Dorsolateral prefrontal cortex (tissue), 120 donors: ENCODE measurements at regions of chr3 and their contacts with region 1.

Region 1: GRCh38 chr3:72447059-72447946 is 400.9 kb downstream of the SHQ1 start:
- DNase-seq: peak; percentile 78 to 96 (median 89)
- H3K4me3 ChIP-seq: peak overlapping the region; percentile 61 to 96 (median 87)
- H3K27ac ChIP-seq: peak overlapping the region; percentile 45 to 96 (median 88)
- H3K27me3 ChIP-seq: no peaks in the 10 kb centered on the region
- CTCF ChIP-seq: peak in 3 of 56 donors; percentile 10 to 18 (median 11)

Region 2: DNA sequence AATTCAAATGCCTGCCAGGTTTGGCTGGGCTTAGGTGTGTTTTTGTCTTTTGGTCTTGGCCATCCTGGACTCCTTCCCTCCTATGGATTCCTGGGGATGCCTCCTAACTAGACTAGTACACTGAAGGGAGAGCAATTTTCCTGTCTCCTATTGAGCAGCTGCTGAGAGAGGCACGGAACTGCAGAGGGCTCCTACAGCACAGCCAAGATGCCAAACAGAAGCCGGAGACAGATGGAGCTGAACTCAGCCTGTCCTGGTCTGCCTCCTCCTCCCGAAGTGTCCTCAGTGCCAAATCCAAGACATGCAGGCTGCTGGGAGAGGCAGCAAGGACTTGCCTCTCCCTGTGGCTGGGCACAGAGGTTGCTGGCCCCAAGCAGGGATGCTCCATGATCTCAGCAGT is 405.8 kb before region 1 on chr3:
- intact Hi-C with region 1: loop called (anchors 10 kb)
- DNase-seq: peak; percentile 33 to 89 (median 78)
- H3K4me3 ChIP-seq: no peak overlapping the region
- H3K27ac ChIP-seq: peak overlapping the region in 8 of 59 donors; percentile 3 to 40 (median 12)
- H3K27me3 ChIP-seq: no peaks in the 10 kb centered on the region
- CTCF ChIP-seq: peak in 37 of 56 donors; percentile 5 to 50 (median 30)

Region 3: DNA sequence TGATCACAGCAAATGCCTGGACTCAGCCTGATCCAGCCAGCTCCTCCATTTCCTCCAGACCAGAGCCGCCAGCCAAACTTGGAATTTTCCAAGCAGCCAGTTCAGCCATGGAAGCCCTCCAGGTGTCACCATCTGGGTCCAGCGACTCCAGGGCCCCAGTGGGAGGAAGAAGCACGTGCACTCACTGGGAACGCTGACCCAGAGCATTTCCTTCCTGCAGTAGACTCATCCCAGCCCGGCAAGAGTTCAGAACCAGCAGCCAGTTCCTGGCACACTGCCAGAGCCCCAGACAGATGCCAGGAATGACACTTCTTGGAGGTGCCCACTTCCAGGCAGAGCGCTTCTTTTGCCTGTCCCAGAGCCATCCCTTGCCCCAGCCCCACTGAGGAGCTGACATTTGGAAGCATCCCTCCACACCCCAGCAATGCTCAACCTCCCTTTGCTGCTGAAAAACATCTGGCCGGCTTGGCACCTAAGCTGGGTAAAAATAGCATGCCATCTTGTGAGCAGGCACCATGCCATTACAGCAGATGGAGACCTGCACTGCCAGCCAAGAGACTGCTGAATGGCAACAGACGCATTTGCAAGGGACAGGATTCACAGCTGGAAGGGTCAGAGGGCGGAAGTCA is 202.0 kb before region 1 on chr3:
- intact Hi-C with region 1: loop called in 1 of 2 experiments (anchors 5 kb)
- DNase-seq: peak; percentile 55 to 87 (median 77)
- H3K4me3 ChIP-seq: no peak overlapping the region
- H3K27ac ChIP-seq: peak overlapping the region in 57 of 59 donors; percentile 15 to 98 (median 82)
- H3K27me3 ChIP-seq: no peaks in the 10 kb centered on the region
- CTCF ChIP-seq: no peak

Region 4: DNA sequence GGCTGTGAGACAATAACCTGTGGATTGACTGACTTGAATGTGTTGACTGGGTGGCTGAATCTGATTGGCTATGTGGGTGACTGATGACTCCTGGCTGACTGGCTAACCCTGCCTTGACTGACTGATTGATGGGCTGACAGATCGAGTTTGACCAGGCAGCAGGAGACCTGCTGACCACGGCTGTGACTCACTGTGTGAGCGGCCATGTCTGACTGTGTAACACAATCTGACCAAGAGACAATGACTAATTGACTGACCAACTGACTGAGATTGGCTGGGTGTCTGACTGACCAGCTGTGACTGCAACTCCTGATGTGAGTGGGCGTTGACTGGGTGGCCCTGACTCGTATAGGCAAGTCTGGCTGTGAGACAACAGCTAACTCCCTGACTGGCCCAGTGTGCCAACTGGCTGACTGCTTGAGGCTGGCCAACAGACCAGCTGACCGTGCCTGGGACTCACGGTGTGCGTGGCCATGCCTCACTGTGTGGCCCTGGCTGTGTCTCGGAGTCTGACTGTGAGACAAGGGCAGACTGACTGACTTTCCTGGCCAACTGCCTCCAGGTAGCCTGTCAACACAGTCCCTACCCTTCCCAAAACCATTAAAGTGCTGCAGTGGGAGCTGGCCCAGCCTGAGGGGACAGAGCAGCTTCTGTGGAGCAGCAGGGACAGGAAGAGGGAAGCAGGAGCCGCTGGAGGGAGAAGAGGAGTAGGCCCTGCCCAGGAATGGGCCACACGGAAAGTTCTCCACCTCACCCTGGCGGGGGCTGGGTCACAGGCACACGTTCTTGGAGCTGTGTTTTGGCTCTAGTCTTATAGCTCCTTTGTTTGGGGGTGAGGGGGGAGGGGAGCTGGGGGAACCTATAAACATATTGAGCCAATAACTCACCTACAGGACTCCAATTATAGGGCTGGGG is 107.9 kb before region 1 on chr3:
- intact Hi-C with region 1: loop called in 1 of 2 experiments (anchors 2 kb)
- DNase-seq: peak in 4 of 10 donors; percentile 40 to 56 (median 48)
- H3K4me3 ChIP-seq: no peak overlapping the region
- H3K27ac ChIP-seq: peak overlapping the region in 17 of 59 donors; percentile 4 to 75 (median 41)
- H3K27me3 ChIP-seq: no peaks in the 10 kb centered on the region
- CTCF ChIP-seq: no peak

Region 5: GRCh38 chr3:72368331-72368975 is 78.8 kb before region 1 on chr3:
- intact Hi-C with region 1: no loop called
- DNase-seq: peak in 1 of 10 donors; percentile 57
- H3K4me3 ChIP-seq: no peak overlapping the region
- H3K27ac ChIP-seq: peak overlapping the region in 14 of 59 donors; percentile 4 to 59 (median 34)
- H3K27me3 ChIP-seq: no peaks in the 10 kb centered on the region
- CTCF ChIP-seq: no peak

Region 6: DNA sequence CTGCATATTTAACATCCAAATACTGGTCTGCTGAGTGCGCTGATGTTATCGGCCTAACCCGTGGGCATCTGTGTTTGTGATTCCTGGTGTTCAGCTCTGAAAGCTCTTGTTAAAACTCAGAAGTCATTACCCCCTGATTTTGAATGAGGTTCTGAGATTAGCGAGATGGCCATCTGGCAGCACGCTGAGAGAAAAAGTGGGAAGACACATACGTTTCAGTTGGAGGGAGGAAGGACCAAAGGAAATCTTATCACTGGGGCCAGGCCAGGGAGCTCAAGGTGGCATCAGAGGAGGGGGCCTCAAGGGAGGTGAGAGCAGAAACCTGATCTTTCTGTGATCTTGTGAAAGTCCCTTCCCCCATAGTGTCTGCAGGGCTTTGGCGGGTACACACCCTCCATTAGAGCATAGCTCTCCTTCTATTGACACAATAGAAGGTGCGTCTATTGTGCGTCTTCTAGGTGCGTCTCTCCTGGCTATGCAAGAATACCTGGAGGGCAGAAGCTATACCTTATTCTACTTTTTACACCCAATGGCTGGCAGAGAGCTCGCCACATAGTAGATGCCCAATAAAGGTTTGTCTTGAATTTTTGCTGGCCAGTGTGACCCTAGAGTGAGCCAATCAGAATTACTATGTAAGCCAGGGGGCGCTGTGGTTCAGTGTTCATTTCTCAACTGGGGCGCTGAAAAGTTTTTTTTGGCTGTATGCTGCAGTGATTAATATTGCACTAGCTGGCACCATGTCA is 218.6 kb after region 1 on chr3:
- intact Hi-C with region 1: loop called (anchors 2 to 5 kb)
- DNase-seq: no peak
- H3K4me3 ChIP-seq: no peak overlapping the region
- H3K27ac ChIP-seq: peak overlapping the region in 15 of 59 donors; percentile 2 to 99 (median 97)
- H3K27me3 ChIP-seq: peaks cover 0 to 9% (median 0%) of the 10 kb centered on the region in 45 donors
- CTCF ChIP-seq: peak; percentile 17 to 67 (median 52)

Region 7: GRCh38 chr3:72722930-72723726 is 275.8 kb after region 1 on chr3:
- intact Hi-C with region 1: no loop called
- DNase-seq: peak in 9 of 10 donors; percentile 21 to 71 (median 57)
- H3K4me3 ChIP-seq: no peak overlapping the region
- H3K27ac ChIP-seq: peak overlapping the region in 14 of 59 donors; percentile 2 to 59 (median 30)
- H3K27me3 ChIP-seq: no peaks in the 10 kb centered on the region
- CTCF ChIP-seq: no peak